ENCODE measurements at regions of chr2 and their contacts with region 1.

Region 1: DNA sequence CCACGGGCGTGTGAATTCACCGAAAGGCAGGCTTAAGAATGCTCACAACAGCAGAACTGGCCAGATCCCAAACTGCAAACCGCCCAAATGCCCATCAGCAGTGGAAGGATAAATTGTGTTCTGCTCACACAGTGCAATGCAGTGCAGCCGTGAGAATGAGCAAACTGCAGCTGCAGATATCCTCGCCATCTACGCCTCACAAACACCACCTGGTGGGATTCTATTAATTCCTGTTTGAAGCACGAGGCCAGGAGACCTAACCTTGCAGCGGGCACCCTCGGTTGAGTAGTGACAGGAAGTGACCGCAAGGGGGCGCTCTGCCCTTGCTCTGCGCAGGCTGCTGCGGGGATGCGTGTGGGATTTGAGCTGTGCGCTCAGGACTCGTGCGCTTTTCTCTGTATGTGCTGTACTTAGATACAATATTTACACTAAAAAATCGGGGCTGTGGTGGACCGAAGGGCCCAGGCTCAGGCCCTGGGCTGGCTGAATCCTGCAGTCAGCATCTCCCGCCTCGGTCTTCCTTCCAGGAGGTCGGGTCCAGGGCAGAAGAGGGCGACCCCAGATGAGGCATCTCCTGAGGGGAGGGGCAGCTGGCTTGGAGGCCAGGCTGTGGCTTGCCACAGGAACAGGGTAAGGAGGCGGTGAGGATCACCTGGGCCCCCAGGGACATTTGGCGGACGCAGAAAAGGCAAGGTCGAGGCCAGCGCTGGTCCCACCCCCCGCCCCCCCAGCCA is 19.8 kb upstream of the PDIA6 start:
- DNase-seq: peak; percentile 87
- H3K4me3 Mint-ChIP-seq: no peak overlapping the region
- H3K27ac Mint-ChIP-seq: no peak overlapping the region
- H3K4me1 Mint-ChIP-seq: no peaks in the 10 kb centered on the region
- H3K27me3 Mint-ChIP-seq: peaks cover 72% of the 10 kb centered on the region
- CTCF ChIP-seq: peak; percentile 97

Region 2: DNA sequence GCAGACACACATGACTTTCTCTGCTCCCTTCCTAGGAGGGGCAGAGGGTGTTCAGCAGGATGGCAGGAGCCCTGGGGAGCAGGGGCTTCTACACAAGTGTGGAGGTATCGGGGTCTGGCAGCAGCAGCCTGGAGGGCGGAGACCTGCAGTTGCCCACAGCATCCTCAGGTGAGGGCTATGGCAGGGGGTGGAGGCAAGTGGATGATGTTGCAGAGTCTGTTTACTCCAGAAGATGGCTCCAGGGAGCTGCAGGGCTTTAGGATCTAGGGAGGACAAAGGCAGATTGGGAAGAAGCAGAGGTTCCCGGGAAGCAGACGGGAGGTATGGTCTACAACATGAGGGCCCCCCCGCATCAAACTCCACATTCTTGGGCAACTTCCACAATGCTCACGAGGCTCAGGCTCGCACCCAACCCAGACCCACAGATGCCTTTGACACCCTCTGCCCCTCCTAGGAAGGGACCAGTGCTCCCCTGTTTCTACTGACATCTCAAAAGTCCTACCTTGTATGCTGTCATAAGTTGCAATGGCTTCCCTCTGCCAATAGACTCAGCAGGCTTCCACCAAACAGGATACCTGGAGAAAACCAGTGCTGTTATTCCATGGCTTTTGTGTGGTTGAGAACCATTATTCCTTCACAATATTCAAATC is 123.0 kb before region 1 on chr2:
- CTCF ChIA-PET with region 1: no interaction called
- intact Hi-C with region 1: loop called (anchors 5 kb)
- DNase-seq: peak; percentile 50
- H3K4me3 Mint-ChIP-seq: no peak overlapping the region
- H3K27ac Mint-ChIP-seq: no peak overlapping the region
- H3K4me1 Mint-ChIP-seq: peaks cover 8% of the 10 kb centered on the region
- H3K27me3 Mint-ChIP-seq: peaks cover 82% of the 10 kb centered on the region
- CTCF ChIP-seq: peak; percentile 41

Region 3: GRCh38 chr2:10900216-10901109 is 68.1 kb after region 1 on chr2:
- CTCF ChIA-PET with region 1: interaction called, 17 read pairs
- intact Hi-C with region 1: loop called (anchors 1 kb)
- DNase-seq: peak; percentile 54
- H3K4me3 Mint-ChIP-seq: no peak overlapping the region
- H3K27ac Mint-ChIP-seq: no peak overlapping the region
- H3K4me1 Mint-ChIP-seq: peaks cover 14% of the 10 kb centered on the region
- H3K27me3 Mint-ChIP-seq: peaks cover 14% of the 10 kb centered on the region
- CTCF ChIP-seq: no peak

Region 4: GRCh38 chr2:11124503-11125068 is 292.2 kb after region 1 on chr2:
- CTCF ChIA-PET with region 1: interaction called, 33 read pairs
- intact Hi-C with region 1: loop called (anchors 1 kb)
- DNase-seq: peak; percentile 88
- H3K4me3 Mint-ChIP-seq: no peak overlapping the region
- H3K27ac Mint-ChIP-seq: no peak overlapping the region
- H3K4me1 Mint-ChIP-seq: peaks cover 18% of the 10 kb centered on the region
- H3K27me3 Mint-ChIP-seq: peaks cover 26% of the 10 kb centered on the region
- CTCF ChIP-seq: peak; percentile 89

Region 5: DNA sequence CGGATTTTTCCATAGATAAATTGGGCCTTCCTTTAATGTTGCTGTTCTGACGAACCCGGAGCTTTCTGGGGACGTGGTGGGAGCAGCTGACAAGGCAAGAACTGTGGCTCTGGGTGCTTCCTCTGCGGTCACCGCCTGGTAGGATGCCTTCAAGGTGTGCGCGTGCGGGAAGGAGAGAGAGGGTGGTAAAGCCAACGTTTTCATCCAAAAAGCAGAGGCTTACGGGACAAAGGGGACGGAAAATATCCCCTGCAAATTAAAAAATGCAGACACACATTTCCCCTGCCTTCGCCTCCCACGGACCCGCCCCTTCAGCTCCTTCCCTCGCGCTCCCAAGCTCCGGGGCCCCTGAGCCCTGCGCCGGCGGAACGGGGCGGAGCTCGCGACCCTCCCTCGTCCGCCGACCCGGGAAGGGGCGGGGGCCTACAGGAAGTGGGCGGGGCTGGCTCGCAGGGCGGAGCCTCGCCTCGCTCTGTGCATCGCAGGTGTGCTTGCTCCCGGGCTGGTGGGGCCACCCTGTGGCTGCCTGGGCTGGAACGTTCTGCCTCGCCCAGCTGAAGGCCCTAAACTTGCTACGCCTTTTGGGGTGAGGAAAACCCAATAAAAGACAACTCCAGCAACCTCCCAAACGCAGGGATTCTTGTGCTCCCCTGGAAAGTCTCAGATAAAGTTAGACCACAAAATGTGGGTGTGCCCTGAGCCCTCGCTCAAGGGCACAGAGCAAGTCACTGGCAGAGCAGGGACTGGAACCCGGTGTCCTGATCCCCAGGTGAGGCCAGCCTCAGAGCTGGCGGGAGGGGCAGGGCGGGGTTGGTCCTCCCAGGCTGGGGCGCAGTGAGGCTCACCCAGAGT is 297.5 kb after region 1 on chr2:
- CTCF ChIA-PET with region 1: interaction called, 33 read pairs
- intact Hi-C with region 1: no loop called
- DNase-seq: peak; percentile 84
- H3K4me3 Mint-ChIP-seq: peak overlapping the region; percentile 21
- H3K27ac Mint-ChIP-seq: no peak overlapping the region
- H3K4me1 Mint-ChIP-seq: peaks cover 14% of the 10 kb centered on the region
- H3K27me3 Mint-ChIP-seq: peaks cover 35% of the 10 kb centered on the region
- CTCF ChIP-seq: no peak

Measured in Calu3 (cell line).